ENCODE measurements at regions of chr6 and their contacts with region 1.

Region 1: GRCh38 chr6:41602864-41603608 is 35.2 kb upstream of the MDFI start:
- DNase-seq: peak; percentile 88
- CTCF ChIP-seq: peak; percentile 98

Region 2: GRCh38 chr6:41278699-41279405 is 324.2 kb before region 1 on chr6:
- in situ Hi-C with region 1: no loop called
- DNase-seq: peak; percentile 58
- CTCF ChIP-seq: peak; percentile 69

Region 3: GRCh38 chr6:41756354-41756753 is 153.3 kb after region 1 on chr6:
- in situ Hi-C with region 1: loop called (anchors 10 kb)
- DNase-seq: no peak
- CTCF ChIP-seq: no peak

Region 4: DNA sequence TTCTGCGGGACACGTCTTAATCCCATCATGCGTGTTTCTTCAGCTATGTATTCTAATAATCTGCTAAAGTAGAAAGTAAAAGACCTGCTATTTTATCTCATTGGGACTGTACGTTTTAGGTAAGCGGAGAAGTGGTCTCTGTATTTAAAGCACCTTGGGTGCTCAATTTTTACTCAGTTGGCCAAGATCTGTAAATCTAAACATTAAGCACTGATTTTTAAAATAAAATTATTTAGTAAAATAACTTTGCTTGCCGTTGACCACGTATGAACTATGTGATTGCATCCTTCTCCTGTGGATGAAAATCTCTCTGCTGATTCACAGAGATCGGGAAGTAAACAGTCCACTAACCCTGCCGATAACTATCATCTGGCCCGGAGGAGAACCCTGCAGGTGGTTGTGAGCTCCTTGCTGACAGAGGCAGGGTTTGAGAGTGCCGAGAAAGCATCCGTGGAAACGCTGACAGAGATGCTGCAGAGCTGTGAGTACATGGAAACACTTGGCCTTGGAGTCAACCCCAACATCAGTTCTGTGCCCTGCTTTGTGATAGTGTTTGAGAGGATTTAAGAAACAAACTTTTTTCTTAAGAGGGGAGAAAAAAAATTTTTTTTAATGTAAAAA is 448.1 kb after region 1 on chr6:
- in situ Hi-C with region 1: no loop called
- DNase-seq: peak; percentile 7
- CTCF ChIP-seq: no peak